Right lobe of liver (tissue), 6 donors: ENCODE measurements at regions of chr9 and their contacts with region 1.

Region 1: GRCh38 chr9:132235946-132236661 is 74.2 kb downstream of the NTNG2 start:
- DNase-seq: peak; percentile 74 to 76 (median 76)
- ATAC-seq: peak; percentile 30 to 43 (median 37)
- H3K4me3 ChIP-seq: no peak overlapping the region
- H3K27ac ChIP-seq: no peak overlapping the region
- H3K4me1 ChIP-seq: no peaks in the 10 kb centered on the region
- H3K27me3 ChIP-seq: no peaks in the 10 kb centered on the region
- CTCF ChIP-seq: peak; percentile 83 to 94 (median 94)
- POLR2A ChIP-seq: no peak

Region 2: DNA sequence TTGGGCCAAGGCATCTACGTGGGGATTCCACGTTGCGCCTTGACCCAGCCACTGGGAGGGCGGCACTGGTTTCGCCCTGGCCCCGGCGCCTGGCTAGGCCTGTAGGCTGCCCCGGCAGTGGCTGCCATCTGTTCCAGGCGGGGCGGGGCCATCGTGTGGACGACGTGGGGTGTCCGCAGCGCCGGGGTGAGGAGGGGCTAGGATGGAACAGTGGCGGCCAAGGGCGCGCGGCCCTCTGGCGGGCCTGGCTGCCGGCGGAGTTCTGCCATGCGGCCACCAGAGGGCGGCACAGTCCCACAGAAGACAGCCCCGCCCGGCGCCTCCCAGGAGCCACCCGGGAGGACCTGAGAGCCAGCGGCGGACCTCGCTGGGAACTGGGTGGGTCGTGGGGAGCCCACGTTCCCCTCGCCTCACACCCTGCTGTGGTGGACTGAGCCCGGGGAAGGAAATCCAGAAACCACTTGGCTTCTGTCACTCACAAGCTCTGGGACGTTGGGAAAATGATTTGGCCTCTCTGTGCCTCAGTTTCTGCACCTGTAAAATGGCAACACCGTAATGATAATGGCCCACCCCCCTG is 473.7 kb before region 1 on chr9:
- intact Hi-C with region 1: loop called (anchors 5 kb)
- DNase-seq: peak; percentile 71 to 79 (median 75)
- ATAC-seq: peak; percentile 97 to 98 (median 98)
- H3K4me3 ChIP-seq: no peak overlapping the region
- H3K27ac ChIP-seq: no peak overlapping the region
- H3K4me1 ChIP-seq: peaks cover 0 to 6% (median 0%) of the 10 kb centered on the region in 4 donors
- H3K27me3 ChIP-seq: no peaks in the 10 kb centered on the region
- CTCF ChIP-seq: peak; percentile 87 to 97 (median 92)
- POLR2A ChIP-seq: no peak

Region 3: GRCh38 chr9:132094314-132094791 is 141.8 kb before region 1 on chr9:
- intact Hi-C with region 1: no loop called
- DNase-seq: no peak
- ATAC-seq: no peak
- H3K4me3 ChIP-seq: no peak overlapping the region
- H3K27ac ChIP-seq: no peak overlapping the region
- H3K4me1 ChIP-seq: no peaks in the 10 kb centered on the region
- H3K27me3 ChIP-seq: no peaks in the 10 kb centered on the region
- CTCF ChIP-seq: no peak
- POLR2A ChIP-seq: no peak

Region 4: DNA sequence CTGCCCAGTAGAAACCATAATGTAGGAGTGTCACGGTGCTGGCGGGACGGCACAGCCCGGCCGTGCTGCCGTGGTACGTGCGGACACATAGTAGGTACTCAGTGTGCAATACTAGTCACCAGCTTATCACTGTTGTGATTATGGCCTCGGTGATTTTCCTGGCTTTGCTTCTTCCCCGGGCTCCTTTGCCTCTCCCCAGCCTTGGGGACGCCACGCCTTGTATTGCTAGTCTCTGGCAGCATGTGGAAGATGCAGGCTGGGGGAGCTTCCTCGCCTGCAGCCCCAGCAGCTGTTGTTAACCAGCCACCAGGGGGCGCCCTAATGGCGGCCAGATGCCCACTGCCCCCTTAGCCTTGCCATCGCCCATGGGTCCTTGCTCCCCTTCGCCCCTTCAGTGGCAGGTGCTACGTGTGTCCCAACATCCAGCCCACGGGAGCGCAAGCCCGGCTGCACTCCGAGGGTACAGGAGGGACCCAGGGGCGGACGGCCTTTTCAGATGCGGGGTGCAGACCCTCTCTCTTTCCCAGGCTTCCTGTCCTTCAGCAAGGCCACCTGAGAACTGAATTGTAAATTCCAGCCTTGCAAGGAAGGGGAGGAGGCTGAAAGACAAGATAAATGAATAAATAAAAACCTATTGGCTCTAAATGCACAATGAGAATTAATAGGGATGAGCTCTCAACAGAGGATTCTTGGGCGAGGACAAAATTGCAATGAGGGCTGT is 66.3 kb before region 1 on chr9:
- intact Hi-C with region 1: loop called in 1 of 2 experiments (anchors 10 kb)
- DNase-seq: peak in 2 of 3 donors; percentile 55 to 56
- ATAC-seq: peak; percentile 48 to 60 (median 58)
- H3K4me3 ChIP-seq: no peak overlapping the region
- H3K27ac ChIP-seq: no peak overlapping the region
- H3K4me1 ChIP-seq: peaks cover 0 to 5% (median 2%) of the 10 kb centered on the region in 4 donors
- H3K27me3 ChIP-seq: peaks cover 0 to 8% of the 10 kb centered on the region in 2 donors
- CTCF ChIP-seq: peak; percentile 52 to 81 (median 76)
- POLR2A ChIP-seq: no peak

Region 5: GRCh38 chr9:132498531-132499210 is 262.6 kb after region 1 on chr9:
- intact Hi-C with region 1: no loop called
- DNase-seq: no peak
- ATAC-seq: peak in 1 of 4 donors; percentile 25
- H3K4me3 ChIP-seq: no peak overlapping the region
- H3K27ac ChIP-seq: no peak overlapping the region
- H3K4me1 ChIP-seq: no peaks in the 10 kb centered on the region
- H3K27me3 ChIP-seq: no peaks in the 10 kb centered on the region
- CTCF ChIP-seq: no peak
- POLR2A ChIP-seq: no peak